ENCODE measurements at regions of chr3 and their contacts with region 1.

Region 1: GRCh38 chr3:98980915-98981596 is 79.6 kb upstream of the DCBLD2 start:
- DNase-seq: no peak
- ATAC-seq: no peak
- H3K4me3 ChIP-seq: no peak overlapping the region
- H3K27ac ChIP-seq: no peak overlapping the region
- H3K4me1 ChIP-seq: no peaks in the 10 kb centered on the region; a peak in 1 of 5 replicates
- H3K27me3 ChIP-seq: no peaks in the 10 kb centered on the region
- CTCF ChIP-seq: no peak
- EP300 ChIP-seq: no peak
- POLR2A ChIP-seq: no peak
- RAD21 ChIP-seq: no peak

Region 2: GRCh38 chr3:98593046-98593936 is 387.8 kb before region 1 on chr3 and contains the start of gene CPOX:
- CTCF ChIA-PET with region 1: no interaction called
- POLR2A ChIA-PET with region 1: no interaction called
- in situ Hi-C with region 1: loop called (anchors 5 kb)
- intact Hi-C with region 1: no loop called
- DNase-seq: peak; percentile 74 to 95 (median 83)
- ATAC-seq: peak; percentile 98
- H3K4me3 ChIP-seq: peak within 1 kb of the TSS; percentile 83
- H3K27ac ChIP-seq: peak within 1 kb of the TSS; percentile 84
- H3K4me1 ChIP-seq: peaks cover 14 to 24% of the 10 kb centered on the region in 2 experiments; a peak in 4 of 5 replicates
- H3K27me3 ChIP-seq: no peaks in the 10 kb centered on the region
- CTCF ChIP-seq: no peak
- EP300 ChIP-seq: peak; percentile 51; the same call in 1 of the 2 replicates
- POLR2A ChIP-seq: peak; percentile 79
- RAD21 ChIP-seq: no peak
- polyA plus RNA-seq, gene CPOX: 14.6 to 17.4 TPM

Region 3: GRCh38 chr3:98901392-98902350 is 79.4 kb before region 1 on chr3 and contains the start of gene DCBLD2:
- CTCF ChIA-PET with region 1: no interaction called
- POLR2A ChIA-PET with region 1: no interaction called
- in situ Hi-C with region 1: no loop called
- intact Hi-C with region 1: loop called (anchors 5 kb)
- DNase-seq: peak; percentile 94 to 98 (median 96)
- ATAC-seq: peak; percentile 99
- H3K4me3 ChIP-seq: peak within 1 kb of the TSS; percentile 79
- H3K27ac ChIP-seq: peak within 1 kb of the TSS; percentile 72
- H3K4me1 ChIP-seq: peaks cover 3 to 9% of the 10 kb centered on the region in 2 experiments; a peak in 4 of 5 replicates
- H3K27me3 ChIP-seq: no peaks in the 10 kb centered on the region
- CTCF ChIP-seq: no peak
- EP300 ChIP-seq: no peak
- POLR2A ChIP-seq: peak; percentile 73
- RAD21 ChIP-seq: no peak
- polyA plus RNA-seq, gene DCBLD2: 2.7 to 4.1 TPM

Measured in K562 (cell line).